ENCODE measurements at regions of chr12 and their contacts with region 1.

Region 1: DNA sequence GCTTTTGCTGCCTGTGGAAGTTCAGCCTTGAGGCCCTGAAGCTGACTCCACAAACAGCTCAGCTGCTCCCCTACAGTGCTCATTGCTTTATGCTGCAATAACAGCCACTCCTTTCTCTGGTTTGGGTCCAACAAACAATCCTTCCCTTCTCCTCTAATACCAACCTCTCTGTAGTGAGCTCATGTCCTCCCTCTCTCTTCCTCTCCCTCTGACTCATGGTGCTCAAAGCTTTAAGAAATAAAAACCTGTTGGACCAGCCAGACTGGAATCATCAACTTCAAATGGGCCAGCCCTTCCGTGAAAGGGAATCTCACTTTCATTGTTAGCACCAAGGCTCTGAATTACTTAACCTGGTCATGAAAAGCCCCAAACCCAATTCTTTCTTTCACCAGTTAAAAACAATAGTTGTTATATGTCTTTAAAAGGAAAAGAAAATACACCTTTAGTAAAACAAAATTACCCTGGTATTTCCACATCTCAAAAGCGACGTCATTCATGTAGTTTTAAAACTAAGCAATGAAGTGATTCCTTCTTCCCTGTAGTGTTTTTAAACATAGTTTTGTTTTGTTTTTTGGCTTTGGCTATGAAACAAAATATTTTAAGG is 126.4 kb downstream of the DUSP6 start:
- DNase-seq: peak; percentile 86
- H3K4me3 Mint-ChIP-seq: peak overlapping the region; percentile 70
- H3K27ac Mint-ChIP-seq: peak overlapping the region; percentile 99
- H3K4me1 Mint-ChIP-seq: peaks cover 70% of the 10 kb centered on the region
- H3K27me3 Mint-ChIP-seq: no peaks in the 10 kb centered on the region

Region 2: DNA sequence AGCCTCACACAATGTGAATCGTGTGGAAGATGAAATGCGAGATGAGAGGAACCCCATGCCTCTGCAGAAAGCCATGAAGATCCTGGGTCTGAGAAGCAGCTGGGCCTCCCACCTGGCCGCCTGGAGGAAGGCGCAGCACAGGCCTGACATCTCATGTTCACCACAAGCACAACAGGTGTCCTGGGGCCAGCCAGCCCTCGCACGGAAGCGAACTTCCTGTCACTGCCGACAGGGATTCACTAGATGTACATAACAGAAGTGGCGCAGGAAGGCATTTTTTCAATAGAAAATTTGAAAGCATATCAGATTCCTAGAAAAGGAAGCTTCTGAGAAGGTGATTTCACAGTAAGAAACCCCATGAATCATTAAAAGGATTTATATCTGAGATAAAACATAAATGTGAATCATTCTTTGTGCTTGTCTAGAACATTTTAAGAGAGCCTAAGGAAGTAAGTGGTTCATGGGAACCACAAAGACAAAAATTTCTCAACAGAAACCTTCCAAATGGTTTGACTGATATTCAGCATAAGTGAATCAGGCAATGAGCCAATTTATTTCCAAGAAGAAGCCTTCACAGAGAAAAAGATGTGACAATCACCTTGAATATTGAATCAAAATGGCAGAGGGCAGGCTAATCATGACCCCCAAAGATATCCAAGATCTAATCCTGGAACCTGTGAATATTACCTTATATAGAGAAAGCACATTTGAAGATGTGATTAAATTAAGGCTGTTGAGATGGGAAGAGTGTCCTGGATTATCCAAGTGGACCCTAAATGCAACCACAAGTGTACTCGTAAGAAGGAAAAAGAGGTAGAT is 185.6 kb before region 1 on chr12:
- CTCF ChIA-PET with region 1: interaction called, 4 read pairs
- intact Hi-C with region 1: loop called (anchors 1 kb)
- DNase-seq: peak; percentile 94
- H3K4me3 Mint-ChIP-seq: no peak overlapping the region
- H3K27ac Mint-ChIP-seq: peak overlapping the region; percentile 82
- H3K4me1 Mint-ChIP-seq: peaks cover 46% of the 10 kb centered on the region
- H3K27me3 Mint-ChIP-seq: no peaks in the 10 kb centered on the region

Region 3: GRCh38 chr12:89162704-89163261 is 63.1 kb before region 1 on chr12:
- CTCF ChIA-PET with region 1: interaction called, 4 read pairs
- intact Hi-C with region 1: loop called (anchors 1 kb)
- DNase-seq: peak; percentile 81
- H3K4me3 Mint-ChIP-seq: no peak overlapping the region
- H3K27ac Mint-ChIP-seq: no peak overlapping the region
- H3K4me1 Mint-ChIP-seq: peaks cover 8% of the 10 kb centered on the region
- H3K27me3 Mint-ChIP-seq: no peaks in the 10 kb centered on the region

Region 4: DNA sequence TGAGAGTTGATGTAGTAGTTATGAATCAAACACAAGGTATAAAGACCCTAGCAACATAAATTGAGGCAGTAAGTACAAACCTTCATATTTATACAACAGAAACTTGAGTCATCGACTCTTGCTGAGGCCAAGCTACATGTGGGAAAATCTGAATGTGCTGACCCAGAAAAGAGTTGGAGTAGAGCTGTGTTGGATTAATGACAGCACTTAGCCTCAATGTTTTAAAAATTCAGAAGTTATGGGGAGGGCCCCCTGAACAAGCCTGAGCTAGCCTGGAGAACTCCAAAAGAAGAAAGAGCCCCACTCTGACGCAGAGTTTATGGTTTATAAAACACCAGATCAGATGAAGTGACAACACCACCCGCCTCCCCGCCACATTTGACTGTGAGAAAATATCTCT is 26.4 kb after region 1 on chr12:
- CTCF ChIA-PET with region 1: no interaction called
- intact Hi-C with region 1: loop called (anchors 1 kb)
- DNase-seq: peak; percentile 14
- H3K4me3 Mint-ChIP-seq: no peak overlapping the region
- H3K27ac Mint-ChIP-seq: peak overlapping the region; percentile 33
- H3K4me1 Mint-ChIP-seq: peaks cover 34% of the 10 kb centered on the region
- H3K27me3 Mint-ChIP-seq: no peaks in the 10 kb centered on the region

Region 5: GRCh38 chr12:89352492-89353187 is 126.7 kb after region 1 on chr12 and contains the start of gene DUSP6:
- CTCF ChIA-PET with region 1: interaction called, 5 read pairs
- intact Hi-C with region 1: loop called (anchors 1 kb)
- DNase-seq: peak; percentile 97
- H3K4me3 Mint-ChIP-seq: peak within 1 kb of the TSS; percentile 89
- H3K27ac Mint-ChIP-seq: peak within 1 kb of the TSS; percentile 92
- H3K4me1 Mint-ChIP-seq: peaks cover 29% of the 10 kb centered on the region
- H3K27me3 Mint-ChIP-seq: peaks cover 2% of the 10 kb centered on the region
- total RNA-seq, gene DUSP6: 24.8 to 26.1 TPM

Region 6: DNA sequence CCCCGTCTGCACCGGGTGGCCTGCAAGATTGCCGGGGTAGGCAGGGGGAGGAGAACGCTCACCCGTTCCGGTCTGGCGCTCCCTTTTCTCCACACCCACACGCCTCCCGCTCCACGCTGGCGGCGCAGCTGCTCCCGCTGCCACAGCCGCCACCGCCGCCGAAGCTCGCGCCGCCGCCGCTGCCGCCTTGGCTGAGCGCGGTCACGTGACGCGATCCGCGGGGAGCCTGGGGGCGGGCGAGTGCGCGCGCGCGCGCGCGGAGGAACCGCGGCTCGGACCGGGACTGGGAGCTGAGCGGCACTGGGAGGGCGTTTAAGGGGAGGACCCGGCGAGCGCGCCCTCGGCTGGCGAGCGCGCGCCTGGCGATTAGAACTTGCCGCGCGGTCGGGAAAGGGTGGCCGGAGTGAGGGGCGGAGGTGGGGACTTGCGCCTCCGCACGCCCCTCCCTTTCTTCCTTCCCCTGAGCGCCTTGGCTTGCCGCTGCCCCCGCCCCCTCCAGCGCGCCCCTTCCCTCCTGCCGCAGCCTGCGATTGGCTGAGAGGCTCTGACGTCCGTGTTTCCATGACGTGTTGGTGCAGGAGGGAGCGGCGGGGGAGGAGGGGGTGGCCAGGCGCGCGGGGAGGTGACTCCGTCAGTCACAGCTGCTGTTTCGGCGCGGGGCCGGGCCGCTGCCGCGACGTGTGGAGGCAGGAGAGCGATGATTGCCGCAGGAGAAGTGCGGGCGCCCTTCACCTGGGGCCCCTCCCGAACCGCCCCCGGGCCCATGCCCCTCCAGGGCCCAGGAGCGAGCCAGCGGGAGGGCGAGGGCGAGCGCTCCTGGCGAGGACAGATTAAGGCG is 483.5 kb after region 1 on chr12:
- CTCF ChIA-PET with region 1: no interaction called
- intact Hi-C with region 1: loop called (anchors 2 kb)
- DNase-seq: peak; percentile 99
- H3K4me3 Mint-ChIP-seq: peak overlapping the region; percentile 79
- H3K27ac Mint-ChIP-seq: peak overlapping the region; percentile 71
- H3K4me1 Mint-ChIP-seq: peaks cover 32% of the 10 kb centered on the region
- H3K27me3 Mint-ChIP-seq: no peaks in the 10 kb centered on the region